ENCODE measurements at regions of chr2 and their contacts with region 1.

Region 1: DNA sequence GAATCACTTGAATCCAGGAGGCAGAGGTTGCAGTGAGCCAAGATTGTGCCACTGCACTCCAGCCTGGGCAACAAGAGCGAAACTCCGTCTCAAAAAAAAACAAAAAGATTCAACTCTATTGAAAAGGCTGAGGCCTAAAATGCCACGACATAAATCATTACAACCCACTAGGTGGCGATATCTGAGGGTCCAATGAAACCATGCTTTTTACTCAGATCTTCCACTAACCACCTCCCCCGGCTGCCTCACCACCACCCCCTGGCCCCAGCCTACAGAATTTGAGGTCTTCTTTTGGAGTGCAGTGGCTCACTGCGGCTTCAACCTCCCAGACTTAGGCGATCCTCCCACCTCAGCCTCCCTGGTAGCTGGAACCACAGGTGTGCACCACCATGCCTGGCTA is 57.5 kb downstream of the AP1S3 start:
- DNase-seq: peak; percentile 44
- H3K4me3 ChIP-seq: no peak overlapping the region
- H3K27ac ChIP-seq: no peak overlapping the region
- H3K4me1 ChIP-seq: peaks cover 8% of the 10 kb centered on the region
- H3K27me3 ChIP-seq: no peaks in the 10 kb centered on the region
- CTCF ChIP-seq: peak; percentile 35 to 40

Region 2: GRCh38 chr2:223760838-223761502 is 18.9 kb before region 1 on chr2:
- CTCF ChIA-PET with region 1: interaction called, 3 read pairs
- dilution Hi-C with region 1: no loop called
- in situ Hi-C with region 1: no loop called
- intact Hi-C with region 1: loop called (anchors 2 kb)
- DNase-seq: peak; percentile 98
- H3K4me3 ChIP-seq: peak overlapping the region in 1 of 3 experiments; percentile 2
- H3K27ac ChIP-seq: peak overlapping the region; percentile 95
- H3K4me1 ChIP-seq: peaks cover 36% of the 10 kb centered on the region
- H3K27me3 ChIP-seq: no peaks in the 10 kb centered on the region
- CTCF ChIP-seq: peak; percentile 39 to 43

Measured in mammary epithelial cell (primary cell).